Activated B cell treated with CpG ODN at 0.5 μM for 24 hours (primary cell): ENCODE measurements at regions of chr9 and their contacts with region 1.

Region 1: GRCh38 chr9:131621551-131622358 is 76.4 kb downstream of the PRRT1B start:
- DNase-seq: peak; percentile 39
- ATAC-seq: peak; percentile 79
- H3K4me3 Mint-ChIP-seq: peak overlapping the region; percentile 74
- H3K27ac Mint-ChIP-seq: peak overlapping the region; percentile 88
- H3K4me1 Mint-ChIP-seq: peaks cover 47% of the 10 kb centered on the region
- H3K27me3 Mint-ChIP-seq: no peaks in the 10 kb centered on the region
- CTCF ChIP-seq: no peak

Region 2: DNA sequence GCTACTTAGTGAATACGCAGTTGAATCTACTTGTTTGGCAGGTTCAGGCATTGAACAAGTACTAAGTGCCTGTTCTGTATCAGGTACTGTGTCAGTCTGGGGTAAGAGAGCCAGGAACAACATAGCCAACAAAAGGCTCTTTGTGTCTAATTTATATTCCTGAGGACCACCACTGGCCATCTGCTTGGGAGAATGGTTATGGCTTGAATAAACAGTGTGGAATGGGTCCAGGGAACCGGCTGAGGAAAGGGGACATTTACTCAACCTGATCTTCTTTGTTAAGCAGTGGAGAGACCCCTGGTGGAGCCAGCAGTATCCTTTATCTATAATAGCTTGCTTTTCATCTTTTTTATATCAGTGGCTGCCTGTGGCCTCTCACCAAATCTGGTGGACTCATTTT is 889.6 kb before region 1 on chr9:
- CTCF ChIA-PET with region 1: no interaction called
- POLR2A ChIA-PET with region 1: no interaction called
- intact Hi-C with region 1: no loop called
- DNase-seq: no peak
- ATAC-seq: no peak
- H3K4me3 Mint-ChIP-seq: no peak overlapping the region
- H3K27ac Mint-ChIP-seq: no peak overlapping the region
- H3K4me1 Mint-ChIP-seq: peaks cover 4% of the 10 kb centered on the region
- H3K27me3 Mint-ChIP-seq: no peaks in the 10 kb centered on the region
- CTCF ChIP-seq: no peak

Region 3: DNA sequence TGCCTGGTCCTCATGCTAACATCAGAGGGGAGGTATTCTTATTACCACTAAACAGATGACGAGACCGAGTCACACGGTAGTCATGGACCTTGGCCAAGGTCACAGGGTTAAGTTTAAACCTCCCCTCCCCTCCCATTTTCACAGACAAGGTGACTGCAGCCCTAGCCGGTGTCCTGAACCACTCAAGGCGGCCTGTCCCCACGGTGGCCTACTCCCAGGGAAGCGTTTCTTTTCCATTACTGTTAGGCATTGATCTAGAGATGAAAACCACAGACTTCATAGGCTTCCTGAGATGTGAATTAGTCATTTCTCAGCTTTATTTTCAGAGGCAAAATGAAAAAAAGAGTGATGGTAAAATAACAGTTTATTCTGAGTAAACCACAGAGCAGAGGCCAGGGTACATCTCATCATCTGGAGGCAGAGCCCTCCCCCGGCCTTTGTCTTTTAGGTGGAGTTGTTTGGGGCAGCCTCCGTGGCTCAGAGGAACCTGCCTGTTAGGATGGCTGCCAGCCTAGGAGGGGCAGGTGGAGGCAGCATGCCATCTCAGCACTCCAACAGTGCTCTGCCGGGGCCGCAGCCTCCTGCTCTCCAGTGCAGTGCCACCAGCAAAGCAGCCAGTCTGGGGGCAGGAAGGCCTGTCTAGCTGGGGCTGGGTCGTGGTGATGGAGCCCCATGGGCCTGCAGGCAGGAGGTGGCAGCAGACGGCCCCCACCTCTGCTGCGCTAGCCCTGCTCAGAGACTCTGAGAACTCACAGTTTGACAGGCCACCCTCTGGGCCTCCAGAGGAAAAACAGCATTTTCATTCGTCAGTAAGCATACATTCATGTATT is 46.9 kb after region 1 on chr9:
- CTCF ChIA-PET with region 1: interaction called, 5 read pairs
- POLR2A ChIA-PET with region 1: interaction called, 151 read pairs
- intact Hi-C with region 1: no loop called
- DNase-seq: no peak
- ATAC-seq: peak; percentile 61
- H3K4me3 Mint-ChIP-seq: peak overlapping the region; percentile 78
- H3K27ac Mint-ChIP-seq: peak overlapping the region; percentile 93
- H3K4me1 Mint-ChIP-seq: peaks cover 99% of the 10 kb centered on the region
- H3K27me3 Mint-ChIP-seq: no peaks in the 10 kb centered on the region
- CTCF ChIP-seq: no peak

Region 4: DNA sequence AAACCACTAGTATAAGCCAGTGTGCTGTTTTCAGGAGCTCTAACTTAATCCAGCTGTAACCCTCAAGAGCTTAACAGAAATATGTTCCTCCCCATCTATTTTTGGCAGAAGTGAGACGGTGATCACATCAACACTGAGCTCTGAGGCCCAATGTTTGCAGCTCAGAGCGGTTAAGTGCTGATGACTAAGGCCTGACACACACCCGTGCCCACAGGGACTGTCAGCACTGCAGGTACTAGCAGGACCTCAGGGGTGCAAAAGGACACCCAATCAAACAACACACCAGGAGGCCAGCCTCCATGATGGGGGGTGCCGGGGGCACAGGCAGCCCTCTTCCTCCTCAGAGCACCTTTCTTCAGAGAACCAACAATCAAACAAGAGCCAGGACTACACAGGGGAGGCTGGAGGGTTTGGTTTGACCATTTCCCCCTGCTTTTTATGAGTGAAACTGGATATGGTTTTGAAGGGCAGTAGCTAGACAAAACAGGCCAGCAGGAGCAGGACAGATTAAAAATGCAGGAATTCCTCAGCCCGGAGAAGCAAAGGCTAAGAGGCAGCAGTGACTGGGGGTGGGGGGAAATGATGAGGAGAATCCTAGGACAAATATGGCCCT is 56.9 kb after region 1 on chr9:
- CTCF ChIA-PET with region 1: no interaction called
- POLR2A ChIA-PET with region 1: interaction called, 151 read pairs
- intact Hi-C with region 1: no loop called
- DNase-seq: peak; percentile 63
- ATAC-seq: peak; percentile 90
- H3K4me3 Mint-ChIP-seq: peak overlapping the region; percentile 93
- H3K27ac Mint-ChIP-seq: peak overlapping the region; percentile 93
- H3K4me1 Mint-ChIP-seq: peaks cover 98% of the 10 kb centered on the region
- H3K27me3 Mint-ChIP-seq: no peaks in the 10 kb centered on the region
- CTCF ChIP-seq: no peak

Region 5: GRCh38 chr9:131722009-131722629 is 100.4 kb after region 1 on chr9:
- CTCF ChIA-PET with region 1: interaction called, 4 read pairs
- POLR2A ChIA-PET with region 1: interaction called, 567 read pairs
- intact Hi-C with region 1: no loop called
- DNase-seq: no peak
- ATAC-seq: no peak
- H3K4me3 Mint-ChIP-seq: no peak overlapping the region
- H3K27ac Mint-ChIP-seq: peak overlapping the region; percentile 35
- H3K4me1 Mint-ChIP-seq: peaks cover 94% of the 10 kb centered on the region
- H3K27me3 Mint-ChIP-seq: no peaks in the 10 kb centered on the region
- CTCF ChIP-seq: no peak